Activated T-helper 2 cell treated with anti-CD3 and anti-CD28 coated beads, Interferon-gamma antibody, Interleukin-2, Interleukin-4, amounts not matched to agents 10 μg/mL and 5 μg/mL and 100 μg/mL, durations not matched to agents 14 hours and 24 hours and 36 hours (primary cell): ENCODE measurements at regions of chr15 and their contacts with region 1.

Region 1: GRCh38 chr15:88620995-88621772 is at the start of gene AEN:
- DNase-seq: peak; percentile 95
- H3K4me3 Mint-ChIP-seq: peak within 1 kb of the TSS; percentile 95
- H3K27ac Mint-ChIP-seq: peak within 1 kb of the TSS; percentile 97
- H3K4me1 Mint-ChIP-seq: peaks cover 38% of the 10 kb centered on the region
- H3K27me3 Mint-ChIP-seq: peaks cover 3% of the 10 kb centered on the region
- total RNA-seq, gene AEN: 52.9 and 54.3 TPM in 2 replicates

Region 2: DNA sequence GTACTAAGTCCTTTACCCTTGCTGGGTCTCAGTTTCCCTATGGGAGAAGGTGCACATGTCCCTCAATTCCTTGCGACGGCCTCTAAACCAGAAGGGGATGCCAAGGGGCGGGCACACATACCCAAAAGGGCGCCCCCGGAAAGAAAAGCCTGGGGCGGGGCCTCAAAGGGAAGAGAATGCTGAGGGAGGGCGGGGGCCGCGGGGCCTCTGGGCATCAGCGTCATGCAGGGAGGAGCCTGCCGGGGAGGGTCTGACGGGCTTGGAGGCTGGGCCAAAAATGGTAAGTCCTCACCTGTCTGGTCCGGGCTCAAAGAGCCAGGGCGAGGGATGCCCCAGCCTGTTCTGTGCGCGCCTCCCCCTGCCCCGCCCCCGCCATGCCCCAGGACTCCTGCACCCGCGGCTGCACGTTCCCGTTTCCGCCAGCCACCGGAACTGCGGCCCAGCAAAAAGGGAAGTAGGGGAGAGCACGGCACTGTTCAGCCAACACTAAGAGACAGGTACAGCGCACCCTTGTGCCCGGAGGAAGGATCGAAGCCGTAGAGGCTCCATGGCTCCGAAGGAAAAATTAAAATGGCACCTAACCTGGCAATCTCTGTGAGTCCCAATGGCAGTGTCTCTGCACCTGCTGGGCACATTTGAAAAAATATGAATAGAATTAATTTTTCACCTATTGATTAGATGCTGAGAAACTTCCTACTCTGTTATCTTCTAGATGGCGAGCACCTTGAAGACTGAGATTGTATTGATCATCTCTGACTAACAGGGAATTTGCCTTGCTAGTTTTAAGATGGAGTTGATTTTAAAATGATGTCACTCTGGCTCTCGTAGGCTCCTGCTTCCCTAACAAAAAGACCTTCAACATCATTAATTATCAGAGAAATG is 74.7 kb before region 1 on chr15 and contains the start of gene DET1:
- intact Hi-C with region 1: loop called (anchors 1 kb)
- DNase-seq: peak; percentile 92
- H3K4me3 Mint-ChIP-seq: peak within 1 kb of the TSS; percentile 87
- H3K27ac Mint-ChIP-seq: peak within 1 kb of the TSS; percentile 85
- H3K4me1 Mint-ChIP-seq: peaks cover 8% of the 10 kb centered on the region
- H3K27me3 Mint-ChIP-seq: no peaks in the 10 kb centered on the region
- total RNA-seq, gene DET1: 1.5 and 2.6 TPM in 2 replicates

Region 3: GRCh38 chr15:88563638-88564037 is 57.5 kb before region 1 on chr15:
- intact Hi-C with region 1: no loop called
- DNase-seq: no peak
- H3K4me3 Mint-ChIP-seq: no peak overlapping the region
- H3K27ac Mint-ChIP-seq: no peak overlapping the region
- H3K4me1 Mint-ChIP-seq: no peaks in the 10 kb centered on the region
- H3K27me3 Mint-ChIP-seq: peaks cover 2% of the 10 kb centered on the region

Region 4: DNA sequence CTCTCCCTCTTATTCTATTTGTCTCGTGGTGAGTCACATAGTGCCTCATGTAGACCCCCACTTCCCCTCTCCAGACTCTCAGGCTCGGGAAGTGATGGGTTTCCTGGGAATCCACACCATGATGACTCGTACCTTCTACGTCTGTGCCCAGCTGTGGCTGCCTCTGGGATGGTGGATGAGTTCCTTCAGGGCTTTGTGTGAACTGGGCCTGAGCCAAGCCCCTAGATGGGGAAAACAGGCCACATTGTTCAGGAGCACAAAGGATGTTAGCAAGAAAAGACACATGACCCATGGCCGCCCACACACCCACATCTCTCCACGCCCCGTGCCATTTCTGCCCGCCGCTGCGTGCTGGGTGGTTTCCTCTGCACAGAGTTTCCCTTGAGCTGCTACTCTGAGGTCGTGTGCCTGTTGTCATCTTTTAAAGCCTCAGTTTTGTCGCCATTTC is 28.1 kb after region 1 on chr15:
- intact Hi-C with region 1: loop called (anchors 1 kb)
- DNase-seq: peak; percentile 52
- H3K4me3 Mint-ChIP-seq: peak overlapping the region; percentile 54
- H3K27ac Mint-ChIP-seq: peak overlapping the region; percentile 88
- H3K4me1 Mint-ChIP-seq: peaks cover 27% of the 10 kb centered on the region
- H3K27me3 Mint-ChIP-seq: no peaks in the 10 kb centered on the region

Region 5: DNA sequence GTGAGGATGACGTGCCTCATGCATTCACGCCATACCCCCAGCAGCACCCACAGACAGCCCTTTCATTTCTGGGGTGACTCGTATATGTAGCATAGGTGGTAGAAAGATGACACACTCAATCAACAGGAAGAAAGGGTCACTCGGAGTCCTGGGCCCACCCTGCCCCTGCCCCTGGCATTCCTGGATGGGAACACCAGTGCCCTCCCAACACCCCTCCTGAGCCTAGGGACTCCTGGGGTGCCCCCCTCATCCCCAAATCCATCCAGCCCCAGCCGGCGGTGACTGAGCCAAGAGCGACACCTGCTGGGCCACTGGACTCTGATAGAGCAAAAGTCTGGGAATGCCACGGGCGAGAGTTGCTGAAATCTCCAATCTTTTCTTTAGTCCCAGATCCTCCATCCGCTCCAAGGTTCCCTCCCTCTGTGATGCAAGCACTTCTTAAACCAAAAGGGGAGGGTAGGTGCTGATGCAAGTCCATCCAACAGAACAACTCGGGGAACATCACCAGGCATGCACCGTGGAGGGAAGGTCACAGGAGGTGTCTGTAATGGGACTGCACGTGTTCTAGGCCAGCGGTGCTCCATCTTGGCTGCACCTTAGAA is 213.1 kb after region 1 on chr15:
- intact Hi-C with region 1: loop called (anchors 1 kb)
- DNase-seq: no peak
- H3K4me3 Mint-ChIP-seq: no peak overlapping the region
- H3K27ac Mint-ChIP-seq: no peak overlapping the region
- H3K4me1 Mint-ChIP-seq: no peaks in the 10 kb centered on the region
- H3K27me3 Mint-ChIP-seq: no peaks in the 10 kb centered on the region

Region 6: GRCh38 chr15:89334510-89335288 is 713.5 kb after region 1 on chr15 and contains the start of gene POLG:
- intact Hi-C with region 1: loop called (anchors 10 kb)
- DNase-seq: peak; percentile 98
- H3K4me3 Mint-ChIP-seq: peak within 1 kb of the TSS; percentile 81
- H3K27ac Mint-ChIP-seq: peak within 1 kb of the TSS; percentile 85
- H3K4me1 Mint-ChIP-seq: peaks cover 51% of the 10 kb centered on the region
- H3K27me3 Mint-ChIP-seq: peaks cover 5% of the 10 kb centered on the region
- total RNA-seq, gene POLG: 124 and 131 TPM in 2 replicates